Right ventricle myocardium inferior (tissue), 1 donor: ENCODE measurements at regions of chr15 and their contacts with region 1.

Region 1: DNA sequence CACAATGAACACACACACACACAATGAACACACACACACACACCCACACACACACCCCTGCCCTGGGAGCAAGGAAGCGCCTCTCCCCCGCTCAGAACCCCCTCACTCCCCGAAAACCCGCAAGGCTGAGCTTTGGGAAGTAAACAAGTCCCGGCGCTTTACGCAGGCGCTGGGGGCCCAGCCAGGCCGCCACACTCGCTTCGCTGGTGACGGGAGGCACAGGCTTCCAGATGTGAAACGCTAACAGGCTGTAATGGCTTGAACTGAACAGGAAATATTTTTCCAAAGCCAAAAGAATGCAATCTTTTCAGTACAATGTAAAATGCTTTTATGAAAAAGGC is 122.7 kb upstream of the IGF1R start:
- DNase-seq: no peak
- ATAC-seq: no peak

Region 2: GRCh38 chr15:98719137-98719740 is 193.6 kb after region 1 on chr15:
- intact Hi-C with region 1: no loop called
- DNase-seq: no peak
- ATAC-seq: no peak

Region 3: GRCh38 chr15:98914626-98915025 is 389.0 kb after region 1 on chr15:
- intact Hi-C with region 1: loop called (anchors 10 kb)
- DNase-seq: no peak
- ATAC-seq: no peak